WTC11 (cell line): ENCODE measurements at regions of chr7 and their contacts with region 1.

Region 1: GRCh38 chr7:55570218-55570873 is 2.0 kb downstream of the VOPP1 start:
- DNase-seq: no peak
- ATAC-seq: no peak
- H3K4me3 Mint-ChIP-seq: peak overlapping the region; percentile 91
- H3K27ac Mint-ChIP-seq: peak overlapping the region; percentile 34
- H3K4me1 Mint-ChIP-seq: peaks cover 72% of the 10 kb centered on the region
- H3K27me3 Mint-ChIP-seq: peaks cover 16% of the 10 kb centered on the region
- CTCF ChIP-seq: no peak

Region 2: GRCh38 chr7:55556031-55556430 is 14.3 kb before region 1 on chr7:
- CTCF ChIA-PET with region 1: interaction called, 12 read pairs
- POLR2A ChIA-PET with region 1: no interaction called
- DNase-seq: no peak
- ATAC-seq: no peak
- H3K4me3 Mint-ChIP-seq: peak overlapping the region; percentile 42
- H3K27ac Mint-ChIP-seq: peak overlapping the region; percentile 89
- H3K4me1 Mint-ChIP-seq: peaks cover 88% of the 10 kb centered on the region
- H3K27me3 Mint-ChIP-seq: no peaks in the 10 kb centered on the region
- CTCF ChIP-seq: no peak